ENCODE measurements at regions of chr4 and their contacts with region 1.

Region 1: GRCh38 chr4:1746265-1746691 is 25.0 kb downstream of the TACC3 start:
- DNase-seq: peak; percentile 75
- H3K4me3 ChIP-seq: no peak overlapping the region
- H3K27ac ChIP-seq: no peak overlapping the region
- H3K4me1 ChIP-seq: peaks cover 4% of the 10 kb centered on the region
- H3K27me3 ChIP-seq: no peaks in the 10 kb centered on the region
- CTCF ChIP-seq: peak; percentile 93 to 96
- POLR2A ChIP-seq: no peak

Region 2: GRCh38 chr4:1759818-1760223 is 13.5 kb after region 1 on chr4:
- CTCF ChIA-PET with region 1: interaction called, 14 read pairs
- POLR2A ChIA-PET with region 1: interaction called, 5 read pairs
- dilution Hi-C with region 1: no loop called
- intact Hi-C with region 1: no loop called
- DNase-seq: no peak
- H3K4me3 ChIP-seq: no peak overlapping the region
- H3K27ac ChIP-seq: no peak overlapping the region
- H3K4me1 ChIP-seq: peaks cover 13% of the 10 kb centered on the region
- H3K27me3 ChIP-seq: no peaks in the 10 kb centered on the region
- CTCF ChIP-seq: no peak
- POLR2A ChIP-seq: no peak

Region 3: GRCh38 chr4:1792832-1793495 is 46.7 kb after region 1 on chr4 and contains the start of gene FGFR3:
- CTCF ChIA-PET with region 1: interaction called, 29 read pairs
- POLR2A ChIA-PET with region 1: no interaction called
- dilution Hi-C with region 1: no loop called
- intact Hi-C with region 1: loop called (anchors 5 kb)
- DNase-seq: no peak
- H3K4me3 ChIP-seq: peak within 1 kb of the TSS in 2 of 3 experiments; percentile 22 to 39
- H3K27ac ChIP-seq: no peak within 1 kb of the TSS
- H3K4me1 ChIP-seq: no peaks in the 10 kb centered on the region
- H3K27me3 ChIP-seq: peaks cover 16 to 24% of the 10 kb centered on the region in 2 experiments
- CTCF ChIP-seq: no peak
- POLR2A ChIP-seq: no peak
- total RNA-seq, gene FGFR3: 1.2 TPM in 2 replicates

Region 4: DNA sequence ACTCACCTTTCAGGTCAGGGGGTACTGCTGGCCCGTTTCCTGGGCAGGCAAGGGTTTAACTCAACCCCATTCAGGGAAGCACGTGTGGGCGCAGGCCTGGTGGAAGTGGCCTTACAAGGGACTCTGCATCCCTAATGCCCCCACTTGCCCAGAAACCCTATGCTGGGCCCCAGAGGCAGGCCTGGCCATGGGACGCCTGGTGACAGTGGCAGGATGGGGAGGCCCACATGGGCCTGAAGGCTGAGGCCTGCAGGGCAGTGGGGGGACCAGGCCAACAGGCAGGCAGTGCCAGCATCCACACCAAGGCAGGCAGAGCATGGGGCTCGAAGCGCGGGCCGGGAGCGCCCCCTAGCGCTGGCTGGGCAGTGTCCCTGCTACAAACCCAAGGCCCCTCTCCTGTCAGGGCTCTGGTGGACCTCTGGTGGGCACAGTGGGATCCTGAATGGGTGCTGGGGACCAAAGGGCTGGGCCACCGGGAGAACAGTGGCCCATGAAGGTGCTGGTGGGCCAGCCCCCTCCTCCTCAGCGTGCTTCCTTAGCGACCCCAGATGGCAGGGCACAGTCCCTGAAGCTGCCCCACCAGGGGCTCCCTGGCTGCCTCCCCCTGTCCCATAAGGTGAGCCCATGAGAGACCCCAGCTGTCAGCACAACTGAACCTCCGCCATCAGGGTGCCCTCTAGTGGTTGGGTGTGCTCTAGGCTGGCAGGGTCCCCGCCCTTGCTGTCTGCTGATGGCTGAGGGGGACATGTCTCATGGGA is 63.7 kb after region 1 on chr4:
- CTCF ChIA-PET with region 1: interaction called, 198 read pairs
- POLR2A ChIA-PET with region 1: interaction called, 5 read pairs
- dilution Hi-C with region 1: no loop called
- intact Hi-C with region 1: loop called (anchors 1 kb)
- DNase-seq: peak; percentile 66
- H3K4me3 ChIP-seq: no peak overlapping the region
- H3K27ac ChIP-seq: no peak overlapping the region
- H3K4me1 ChIP-seq: no peaks in the 10 kb centered on the region
- H3K27me3 ChIP-seq: no peaks in the 10 kb centered on the region
- CTCF ChIP-seq: peak; percentile 97 to 99
- POLR2A ChIP-seq: no peak

Measured in endothelial cell of umbilical vein (primary cell).